ENCODE measurements at regions of chr12 and their contacts with region 1.

Region 1: GRCh38 chr12:94133964-94134795 is 14.2 kb upstream of the PLXNC1 start:
- DNase-seq: peak in 5 of 9 experiments; percentile 9 to 75 (median 39)
- ATAC-seq: peak; percentile 100
- H3K4me3 ChIP-seq: no peak overlapping the region
- H3K4me3 Mint-ChIP-seq: no peak overlapping the region
- H3K27ac ChIP-seq: no peak overlapping the region
- H3K27ac Mint-ChIP-seq: no peak overlapping the region
- H3K4me1 ChIP-seq: no peaks in the 10 kb centered on the region
- H3K4me1 Mint-ChIP-seq: peaks cover 3% of the 10 kb centered on the region
- H3K27me3 ChIP-seq: no peaks in the 10 kb centered on the region
- H3K27me3 Mint-ChIP-seq: no peaks in the 10 kb centered on the region
- CTCF ChIP-seq: peak; percentile 77

Region 2: GRCh38 chr12:93847517-93848474 is 286.4 kb before region 1 on chr12:
- CTCF ChIA-PET with region 1: no interaction called
- POLR2A ChIA-PET with region 1: no interaction called
- intact Hi-C with region 1: no loop called
- DNase-seq: no peak
- ATAC-seq: no peak
- H3K4me3 ChIP-seq: no peak overlapping the region
- H3K4me3 Mint-ChIP-seq: no peak overlapping the region
- H3K27ac ChIP-seq: no peak overlapping the region
- H3K27ac Mint-ChIP-seq: no peak overlapping the region
- H3K4me1 ChIP-seq: peaks cover 12% of the 10 kb centered on the region
- H3K4me1 Mint-ChIP-seq: peaks cover 28% of the 10 kb centered on the region
- H3K27me3 ChIP-seq: no peaks in the 10 kb centered on the region
- H3K27me3 Mint-ChIP-seq: no peaks in the 10 kb centered on the region
- CTCF ChIP-seq: no peak

Region 3: DNA sequence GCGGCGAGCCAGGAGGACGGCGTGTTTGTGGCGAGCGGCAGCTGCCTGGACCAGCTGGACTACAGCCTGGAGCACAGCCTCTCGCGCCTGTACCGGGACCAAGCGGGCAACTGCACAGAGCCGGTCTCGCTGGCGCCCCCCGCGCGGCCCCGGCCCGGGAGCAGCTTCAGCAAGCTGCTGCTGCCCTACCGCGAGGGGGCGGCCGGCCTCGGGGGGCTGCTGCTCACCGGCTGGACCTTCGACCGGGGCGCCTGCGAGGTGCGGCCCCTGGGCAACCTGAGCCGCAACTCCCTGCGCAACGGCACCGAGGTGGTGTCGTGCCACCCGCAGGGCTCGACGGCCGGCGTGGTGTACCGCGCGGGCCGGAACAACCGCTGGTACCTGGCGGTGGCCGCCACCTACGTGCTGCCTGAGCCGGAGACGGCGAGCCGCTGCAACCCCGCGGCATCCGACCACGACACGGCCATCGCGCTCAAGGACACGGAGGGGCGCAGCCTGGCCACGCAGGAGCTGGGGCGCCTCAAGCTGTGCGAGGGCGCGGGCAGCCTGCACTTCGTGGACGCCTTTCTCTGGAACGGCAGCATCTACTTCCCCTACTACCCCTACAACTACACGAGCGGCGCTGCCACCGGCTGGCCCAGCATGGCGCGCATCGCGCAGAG is 15.1 kb after region 1 on chr12:
- CTCF ChIA-PET with region 1: interaction called, 34 read pairs
- POLR2A ChIA-PET with region 1: no interaction called
- intact Hi-C with region 1: no loop called
- DNase-seq: peak; percentile 10 to 70 (median 40)
- ATAC-seq: peak; percentile 17
- H3K4me3 ChIP-seq: peak overlapping the region; percentile 57 to 61
- H3K4me3 Mint-ChIP-seq: peak overlapping the region; percentile 90
- H3K27ac ChIP-seq: no peak overlapping the region
- H3K27ac Mint-ChIP-seq: no peak overlapping the region
- H3K4me1 ChIP-seq: peaks cover 17% of the 10 kb centered on the region
- H3K4me1 Mint-ChIP-seq: peaks cover 41% of the 10 kb centered on the region
- H3K27me3 ChIP-seq: no peaks in the 10 kb centered on the region
- H3K27me3 Mint-ChIP-seq: no peaks in the 10 kb centered on the region
- CTCF ChIP-seq: peak; percentile 33

Region 4: GRCh38 chr12:94240171-94240570 is 106.0 kb after region 1 on chr12:
- CTCF ChIA-PET with region 1: no interaction called
- POLR2A ChIA-PET with region 1: no interaction called
- intact Hi-C with region 1: no loop called
- DNase-seq: peak in 1 of 9 experiments; percentile 22
- ATAC-seq: no peak
- H3K4me3 ChIP-seq: no peak overlapping the region
- H3K4me3 Mint-ChIP-seq: no peak overlapping the region
- H3K27ac ChIP-seq: no peak overlapping the region
- H3K27ac Mint-ChIP-seq: no peak overlapping the region
- H3K4me1 ChIP-seq: peaks cover 11% of the 10 kb centered on the region
- H3K4me1 Mint-ChIP-seq: peaks cover 16% of the 10 kb centered on the region
- H3K27me3 ChIP-seq: no peaks in the 10 kb centered on the region
- H3K27me3 Mint-ChIP-seq: no peaks in the 10 kb centered on the region
- CTCF ChIP-seq: no peak

Region 5: DNA sequence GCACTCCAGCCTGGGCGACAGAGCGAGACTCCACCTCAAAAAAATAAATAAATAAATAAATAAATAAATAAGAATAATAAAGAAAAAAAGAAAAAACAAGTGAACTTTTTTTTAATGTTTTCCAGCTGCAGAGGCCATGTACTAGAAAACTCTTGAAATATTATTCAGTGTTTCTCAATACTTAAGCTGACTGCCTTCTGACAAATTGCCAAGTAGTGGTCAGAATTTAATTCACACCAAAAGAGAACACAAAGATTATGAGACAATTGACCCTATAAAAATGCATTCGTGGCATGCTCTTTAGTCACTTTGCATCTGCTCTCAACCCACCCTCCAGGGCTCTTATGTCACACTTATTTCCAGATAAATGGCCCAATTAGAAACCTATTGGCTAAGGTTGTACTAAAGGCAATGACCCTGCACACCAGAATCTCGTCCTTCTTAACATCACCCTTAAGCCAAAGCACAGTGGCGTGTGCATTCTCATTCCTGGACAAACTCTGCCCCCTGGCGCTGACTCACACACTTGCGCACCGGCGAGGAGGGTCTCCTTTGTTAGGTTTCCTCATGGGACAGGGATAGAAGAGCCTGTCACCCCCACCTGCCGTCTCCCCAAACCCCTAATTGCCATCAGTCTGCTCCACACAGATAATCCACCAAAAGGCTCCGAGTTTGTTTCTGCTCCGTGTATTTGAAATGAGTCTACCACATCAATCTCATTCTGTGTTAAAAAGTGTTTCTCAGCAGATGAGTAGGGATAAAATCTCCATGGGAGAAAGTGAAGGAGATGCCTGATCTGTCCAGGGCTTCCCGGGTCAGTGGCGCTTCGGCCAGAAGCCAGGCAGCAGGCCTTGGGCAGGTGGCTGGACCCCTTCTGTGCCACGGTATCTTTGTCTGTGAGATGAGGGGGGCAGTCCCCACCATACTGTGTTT is 398.6 kb after region 1 on chr12:
- CTCF ChIA-PET with region 1: interaction called, 33 read pairs
- POLR2A ChIA-PET with region 1: interaction called, 3 read pairs
- intact Hi-C with region 1: loop called (anchors 1 kb)
- DNase-seq: peak; percentile 47 to 79 (median 70)
- ATAC-seq: peak; percentile 79
- H3K4me3 ChIP-seq: no peak overlapping the region
- H3K4me3 Mint-ChIP-seq: no peak overlapping the region
- H3K27ac ChIP-seq: no peak overlapping the region
- H3K27ac Mint-ChIP-seq: no peak overlapping the region
- H3K4me1 ChIP-seq: no peaks in the 10 kb centered on the region
- H3K4me1 Mint-ChIP-seq: no peaks in the 10 kb centered on the region
- H3K27me3 ChIP-seq: no peaks in the 10 kb centered on the region
- H3K27me3 Mint-ChIP-seq: peaks cover 10% of the 10 kb centered on the region
- CTCF ChIP-seq: peak; percentile 75

Region 6: DNA sequence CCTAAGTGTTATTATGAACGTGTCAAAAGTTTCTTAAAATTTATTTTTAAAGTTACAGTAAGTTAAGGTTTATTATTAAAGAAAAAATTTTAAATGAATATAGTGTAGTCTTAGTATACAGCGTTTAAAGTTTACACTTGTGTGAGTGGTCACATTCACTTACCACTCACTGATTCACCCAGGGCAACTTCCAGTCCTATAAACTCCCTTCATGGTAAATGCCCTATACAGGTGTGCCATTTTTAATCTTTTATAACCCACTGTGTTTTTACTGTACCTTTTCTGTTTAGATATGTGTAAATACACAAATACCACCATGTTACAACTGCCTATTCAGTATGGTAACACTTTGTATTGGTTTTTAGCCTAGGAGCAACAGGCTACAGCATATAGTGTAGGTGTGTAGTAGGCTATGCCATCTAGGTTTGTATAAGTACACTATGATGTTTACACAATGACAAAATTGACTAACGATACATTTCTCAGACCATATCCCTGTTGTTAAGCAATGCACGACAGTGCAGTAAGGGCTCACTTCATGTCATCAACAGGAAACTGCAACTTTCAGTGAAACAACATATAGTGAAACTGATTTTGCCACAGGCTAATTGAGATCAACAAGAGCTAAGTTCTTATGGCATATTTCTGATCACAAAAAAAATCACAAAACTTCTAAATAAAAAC is 628.2 kb after region 1 on chr12:
- CTCF ChIA-PET with region 1: interaction called, 4 read pairs
- POLR2A ChIA-PET with region 1: no interaction called
- intact Hi-C with region 1: loop called (anchors 2 to 5 kb)
- DNase-seq: no peak
- ATAC-seq: no peak
- H3K4me3 ChIP-seq: no peak overlapping the region
- H3K4me3 Mint-ChIP-seq: no peak overlapping the region
- H3K27ac ChIP-seq: no peak overlapping the region
- H3K27ac Mint-ChIP-seq: no peak overlapping the region
- H3K4me1 ChIP-seq: no peaks in the 10 kb centered on the region
- H3K4me1 Mint-ChIP-seq: peaks cover 2% of the 10 kb centered on the region
- H3K27me3 ChIP-seq: peaks cover 0 to 2% of the 10 kb centered on the region in 2 experiments
- H3K27me3 Mint-ChIP-seq: peaks cover 6% of the 10 kb centered on the region
- CTCF ChIP-seq: no peak

Region 7: DNA sequence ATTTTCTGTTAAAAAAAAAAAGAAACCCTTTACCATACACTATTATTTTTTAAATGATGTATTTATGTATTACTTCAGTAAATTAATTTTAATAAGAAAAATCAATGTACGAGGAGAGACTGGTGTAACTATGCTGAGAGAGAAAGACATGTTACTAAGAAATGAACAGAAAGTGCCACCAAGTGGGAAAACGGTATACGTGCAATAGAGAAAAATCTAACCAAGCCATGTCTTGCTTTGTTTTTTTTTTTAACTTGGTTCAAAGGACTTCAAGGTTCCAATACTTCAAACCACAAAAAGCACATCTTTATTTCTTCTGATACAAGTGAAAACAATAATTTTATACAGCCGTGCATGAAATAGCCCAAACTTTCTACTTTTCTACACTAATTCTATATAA is 846.4 kb after region 1 on chr12:
- CTCF ChIA-PET with region 1: no interaction called
- POLR2A ChIA-PET with region 1: no interaction called
- intact Hi-C with region 1: loop called (anchors 2 to 10 kb)
- DNase-seq: peak in 2 of 9 experiments; percentile 38 to 55
- ATAC-seq: peak; percentile 61
- H3K4me3 ChIP-seq: no peak overlapping the region
- H3K4me3 Mint-ChIP-seq: no peak overlapping the region
- H3K27ac ChIP-seq: no peak overlapping the region
- H3K27ac Mint-ChIP-seq: peak overlapping the region; percentile 45
- H3K4me1 ChIP-seq: peaks cover 17% of the 10 kb centered on the region
- H3K4me1 Mint-ChIP-seq: peaks cover 57% of the 10 kb centered on the region
- H3K27me3 ChIP-seq: no peaks in the 10 kb centered on the region
- H3K27me3 Mint-ChIP-seq: no peaks in the 10 kb centered on the region
- CTCF ChIP-seq: peak; percentile 26

Region 8: DNA sequence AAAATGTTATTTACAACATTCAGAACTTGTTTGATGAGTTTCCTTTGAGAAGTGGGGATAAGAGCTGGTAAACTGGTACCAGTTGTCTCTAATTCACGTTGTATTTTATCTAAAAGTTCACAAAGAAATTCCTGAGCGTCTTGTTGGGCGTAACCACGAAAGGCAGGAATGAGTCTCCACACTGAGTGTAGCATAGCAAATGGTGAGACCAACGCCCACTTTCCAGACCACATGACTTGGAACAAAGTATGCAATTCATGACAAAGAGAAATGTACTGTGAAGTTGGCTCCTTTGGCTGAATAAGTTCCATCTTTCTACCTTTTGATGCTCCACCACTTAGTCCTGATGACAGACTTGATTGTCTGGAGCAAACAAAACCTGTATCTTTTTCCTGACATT is 1398.7 kb after region 1 on chr12:
- CTCF ChIA-PET with region 1: no interaction called
- POLR2A ChIA-PET with region 1: no interaction called
- intact Hi-C with region 1: loop called in 1 of 2 experiments (anchors 10 kb)
- DNase-seq: no peak
- ATAC-seq: no peak
- H3K4me3 ChIP-seq: no peak overlapping the region
- H3K4me3 Mint-ChIP-seq: no peak overlapping the region
- H3K27ac ChIP-seq: no peak overlapping the region
- H3K27ac Mint-ChIP-seq: no peak overlapping the region
- H3K4me1 ChIP-seq: no peaks in the 10 kb centered on the region
- H3K4me1 Mint-ChIP-seq: peaks cover 12% of the 10 kb centered on the region
- H3K27me3 ChIP-seq: no peaks in the 10 kb centered on the region
- H3K27me3 Mint-ChIP-seq: peaks cover 2% of the 10 kb centered on the region
- CTCF ChIP-seq: no peak